Left lung (tissue), 14 donors: ENCODE measurements at regions of chr20 and their contacts with region 1.

Region 1: GRCh38 chr20:10673988-10674711 is at the start of gene JAG1:
- DNase-seq: peak; percentile 95 to 99 (median 98)
- ATAC-seq: peak; percentile 81
- H3K4me3 ChIP-seq: peak within 1 kb of the TSS; percentile 73 to 82
- H3K27ac ChIP-seq: peak within 1 kb of the TSS; percentile 98 to 99
- H3K4me1 ChIP-seq: peaks cover 9 to 49% of the 10 kb centered on the region in 2 donors
- H3K27me3 ChIP-seq: peaks cover 0 to 11% of the 10 kb centered on the region in 2 donors
- CTCF ChIP-seq: no peak
- polyA plus RNA-seq, gene JAG1: 49.7 to 70.8 (median 57.8) TPM

Region 2: DNA sequence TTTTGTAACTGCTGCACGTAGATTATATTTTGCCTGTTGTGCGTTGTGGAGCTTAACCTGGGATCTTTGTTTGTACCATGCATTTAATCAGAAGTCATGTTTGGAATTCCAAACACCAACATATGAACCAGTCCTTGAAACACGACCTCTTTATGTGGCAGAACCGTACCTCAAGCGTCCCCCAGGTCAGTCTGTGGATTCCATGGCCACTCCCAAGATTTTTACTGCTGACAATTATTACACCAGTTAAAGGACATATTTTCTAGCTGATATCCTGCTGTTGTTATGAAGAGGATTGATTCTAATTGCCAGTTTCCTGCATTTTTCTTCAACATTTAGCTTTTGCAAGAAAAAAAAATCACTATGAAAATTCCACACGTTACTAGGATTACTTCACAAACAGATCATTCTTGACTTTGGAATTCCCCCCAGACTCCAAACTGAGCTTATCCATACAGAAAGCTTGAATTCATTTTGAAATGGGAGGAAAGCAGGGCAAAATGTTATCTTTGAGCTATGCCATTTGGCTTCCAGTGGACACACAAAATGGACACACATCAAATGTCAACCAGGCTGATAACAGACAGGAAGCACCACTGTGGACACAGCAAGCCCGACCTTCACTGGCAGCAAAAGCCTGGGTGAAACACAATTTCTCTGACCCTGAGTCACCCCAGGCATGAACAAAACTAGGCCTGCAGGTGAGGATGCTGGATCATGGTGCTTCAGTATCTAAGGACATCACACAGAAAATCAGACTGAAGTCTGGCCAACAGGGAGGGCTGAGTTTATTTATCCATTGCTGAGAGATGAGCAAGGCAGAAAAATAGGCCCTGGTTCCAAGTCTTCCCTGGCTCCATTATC is 542.5 kb after region 1 on chr20:
- intact Hi-C with region 1: loop called in 1 of 2 experiments (anchors 10 kb)
- DNase-seq: no peak
- ATAC-seq: peak; percentile 13
- H3K4me3 ChIP-seq: no peak overlapping the region
- H3K27ac ChIP-seq: no peak overlapping the region
- H3K4me1 ChIP-seq: peaks cover 9 to 13% of the 10 kb centered on the region in 2 donors
- H3K27me3 ChIP-seq: no peaks in the 10 kb centered on the region
- CTCF ChIP-seq: no peak

Region 3: DNA sequence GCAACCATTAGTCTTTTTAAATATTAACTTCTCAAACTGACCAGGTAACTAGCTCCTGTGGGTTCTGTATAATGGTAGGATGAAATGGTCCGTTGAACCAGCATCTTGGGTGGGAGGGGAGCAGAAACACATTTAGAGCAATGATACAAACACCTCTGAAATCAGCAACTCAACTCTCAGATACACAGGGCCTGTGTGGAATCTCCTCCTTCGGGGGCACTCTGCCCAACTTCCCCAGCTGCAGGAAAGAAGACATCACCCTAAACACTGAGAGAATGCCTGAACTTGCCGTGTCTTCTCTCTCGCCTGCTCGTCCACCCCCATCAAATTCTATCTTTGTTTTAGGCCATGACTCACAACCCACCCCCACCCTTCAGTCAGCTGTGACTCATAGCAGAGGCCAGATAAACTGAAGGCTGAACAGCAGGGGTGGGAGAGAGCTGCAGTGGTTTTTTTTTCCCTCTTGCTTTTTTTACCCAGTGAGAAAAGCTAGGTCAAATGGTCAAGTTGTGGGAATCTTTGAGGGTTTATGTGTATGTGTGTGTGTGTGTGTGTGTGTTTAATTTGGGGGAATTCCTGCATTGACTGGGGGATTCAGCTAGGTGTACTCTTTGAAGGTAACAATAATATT is 593.1 kb after region 1 on chr20:
- intact Hi-C with region 1: loop called in 1 of 2 experiments (anchors 10 kb)
- DNase-seq: peak in 2 of 4 donors; percentile 23 to 40
- ATAC-seq: peak; percentile 90
- H3K4me3 ChIP-seq: no peak overlapping the region
- H3K27ac ChIP-seq: peak overlapping the region; percentile 23 to 39
- H3K4me1 ChIP-seq: peaks cover 6 to 8% of the 10 kb centered on the region in 2 donors
- H3K27me3 ChIP-seq: no peaks in the 10 kb centered on the region
- CTCF ChIP-seq: no peak